ENCODE measurements at regions of chr2 and their contacts with region 1.

Region 1: DNA sequence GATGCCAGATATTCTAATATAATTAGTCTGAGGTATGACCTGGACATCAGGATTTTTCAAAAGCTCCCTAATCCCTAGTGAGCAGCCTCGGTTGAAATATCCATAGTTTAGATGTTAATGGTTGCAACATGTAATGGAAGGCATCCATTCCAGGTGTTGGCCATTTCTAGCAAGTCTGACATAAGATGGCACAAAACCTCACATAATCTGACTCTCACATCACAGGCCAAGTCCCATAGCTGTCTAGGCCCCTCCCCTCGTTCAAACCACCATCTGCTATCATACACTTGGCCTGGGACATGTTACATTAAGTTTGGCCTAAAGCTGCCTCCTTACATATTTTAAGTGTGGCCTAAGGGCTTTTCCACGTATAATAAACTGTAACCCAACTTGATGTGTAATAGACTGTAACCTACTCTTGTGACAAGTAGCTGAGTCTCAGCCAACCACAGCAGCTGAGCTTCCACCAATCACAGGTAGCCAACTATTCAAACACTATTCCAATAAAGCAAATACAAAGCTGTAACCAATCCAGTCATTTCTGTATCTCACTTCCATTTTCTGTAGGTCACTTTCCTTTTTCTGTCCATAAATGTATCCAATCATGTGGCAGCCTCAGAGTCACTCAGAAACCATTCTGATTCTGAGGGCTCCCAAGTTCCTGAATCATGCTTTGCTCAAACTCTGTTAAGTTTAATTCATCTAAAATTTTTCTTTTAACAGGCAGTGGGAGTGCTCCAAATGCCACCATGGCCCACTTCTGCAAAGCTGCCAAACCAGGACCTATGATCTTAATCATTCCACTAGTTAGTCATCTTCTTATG is 59.4 kb downstream of the ADD2 start:
- DNase-seq: no peak
- ATAC-seq: no peak
- H3K4me3 ChIP-seq: no peak overlapping the region
- H3K27ac ChIP-seq: no peak overlapping the region
- H3K4me1 ChIP-seq: no peaks in the 10 kb centered on the region
- H3K27me3 ChIP-seq: no peaks in the 10 kb centered on the region
- CTCF ChIP-seq: no peak
- POLR2A ChIP-seq: no peak

Region 2: GRCh38 chr2:70726947-70727725 is 18.5 kb after region 1 on chr2:
- intact Hi-C with region 1: loop called in 1 of 10 experiments (anchors 1 kb)
- DNase-seq: no peak
- ATAC-seq: no peak
- H3K4me3 ChIP-seq: no peak overlapping the region
- H3K27ac ChIP-seq: no peak overlapping the region
- H3K4me1 ChIP-seq: no peaks in the 10 kb centered on the region
- H3K27me3 ChIP-seq: no peaks in the 10 kb centered on the region
- CTCF ChIP-seq: no peak
- POLR2A ChIP-seq: no peak

Measured in heart left ventricle (tissue), 16 donors.